Activated CD4-positive, alpha-beta T cell treated with anti-CD3 and anti-CD28 coated beads for 36 hours (primary cell): ENCODE measurements at regions of chr7 and their contacts with region 1.

Region 1: GRCh38 chr7:128455551-128456254 is at the start of gene HILPDA:
- DNase-seq: peak; percentile 98
- ATAC-seq: peak; percentile 81
- H3K4me3 Mint-ChIP-seq: peak within 1 kb of the TSS; percentile 83
- H3K27ac Mint-ChIP-seq: peak within 1 kb of the TSS; percentile 99
- H3K4me1 Mint-ChIP-seq: peaks cover 60% of the 10 kb centered on the region
- H3K27me3 Mint-ChIP-seq: peaks cover 8% of the 10 kb centered on the region
- total RNA-seq, gene HILPDA: 227 to 309 TPM

Region 2: GRCh38 chr7:127392566-127393367 is 1062.9 kb before region 1 on chr7 and contains the start of gene ZNF800:
- CTCF ChIA-PET with region 1: no interaction called
- POLR2A ChIA-PET with region 1: no interaction called
- intact Hi-C with region 1: loop called in 1 of 2 experiments (anchors 10 kb)
- DNase-seq: peak; percentile 93
- ATAC-seq: peak; percentile 81
- H3K4me3 Mint-ChIP-seq: peak within 1 kb of the TSS; percentile 87
- H3K27ac Mint-ChIP-seq: peak within 1 kb of the TSS; percentile 96
- H3K4me1 Mint-ChIP-seq: peaks cover 62% of the 10 kb centered on the region
- H3K27me3 Mint-ChIP-seq: no peaks in the 10 kb centered on the region
- total RNA-seq, gene ZNF800: 27.5 to 34.7 TPM

Region 3: GRCh38 chr7:127651556-127652332 is 804.0 kb before region 1 on chr7 and contains the start of gene SND1:
- CTCF ChIA-PET with region 1: no interaction called
- POLR2A ChIA-PET with region 1: no interaction called
- intact Hi-C with region 1: loop called in 1 of 2 experiments (anchors 5 kb)
- DNase-seq: peak; percentile 99
- ATAC-seq: peak; percentile 94
- H3K4me3 Mint-ChIP-seq: no peak within 1 kb of the TSS
- H3K27ac Mint-ChIP-seq: peak within 1 kb of the TSS; percentile 99
- H3K4me1 Mint-ChIP-seq: peaks cover 37% of the 10 kb centered on the region
- H3K27me3 Mint-ChIP-seq: no peaks in the 10 kb centered on the region
- total RNA-seq, gene SND1: 193 to 214 TPM

Region 4: GRCh38 chr7:128387216-128388144 is 68.2 kb before region 1 on chr7:
- CTCF ChIA-PET with region 1: interaction called, 14 read pairs
- POLR2A ChIA-PET with region 1: no interaction called
- intact Hi-C with region 1: no loop called
- DNase-seq: peak; percentile 84
- ATAC-seq: peak; percentile 83
- H3K4me3 Mint-ChIP-seq: no peak overlapping the region
- H3K27ac Mint-ChIP-seq: no peak overlapping the region
- H3K4me1 Mint-ChIP-seq: peaks cover 2% of the 10 kb centered on the region
- H3K27me3 Mint-ChIP-seq: no peaks in the 10 kb centered on the region

Region 5: GRCh38 chr7:128425850-128426249 is 29.9 kb before region 1 on chr7:
- CTCF ChIA-PET with region 1: interaction called, 269 read pairs
- POLR2A ChIA-PET with region 1: interaction called, 3 read pairs
- intact Hi-C with region 1: loop called (anchors 1 kb)
- DNase-seq: peak; percentile 91
- ATAC-seq: peak; percentile 82
- H3K4me3 Mint-ChIP-seq: no peak overlapping the region
- H3K27ac Mint-ChIP-seq: no peak overlapping the region
- H3K4me1 Mint-ChIP-seq: no peaks in the 10 kb centered on the region
- H3K27me3 Mint-ChIP-seq: peaks cover 12% of the 10 kb centered on the region

Region 6: GRCh38 chr7:128739048-128739962 is 283.6 kb after region 1 on chr7 and contains the start of gene CALU:
- CTCF ChIA-PET with region 1: no interaction called
- POLR2A ChIA-PET with region 1: interaction called, 3 read pairs
- intact Hi-C with region 1: loop called in 1 of 2 experiments (anchors 1 kb)
- DNase-seq: peak; percentile 97
- ATAC-seq: peak; percentile 98
- H3K4me3 Mint-ChIP-seq: peak within 1 kb of the TSS; percentile 99
- H3K27ac Mint-ChIP-seq: peak within 1 kb of the TSS; percentile 93
- H3K4me1 Mint-ChIP-seq: peaks cover 38% of the 10 kb centered on the region
- H3K27me3 Mint-ChIP-seq: peaks cover 3% of the 10 kb centered on the region
- total RNA-seq, gene CALU: 32.9 to 33.8 TPM

Region 7: DNA sequence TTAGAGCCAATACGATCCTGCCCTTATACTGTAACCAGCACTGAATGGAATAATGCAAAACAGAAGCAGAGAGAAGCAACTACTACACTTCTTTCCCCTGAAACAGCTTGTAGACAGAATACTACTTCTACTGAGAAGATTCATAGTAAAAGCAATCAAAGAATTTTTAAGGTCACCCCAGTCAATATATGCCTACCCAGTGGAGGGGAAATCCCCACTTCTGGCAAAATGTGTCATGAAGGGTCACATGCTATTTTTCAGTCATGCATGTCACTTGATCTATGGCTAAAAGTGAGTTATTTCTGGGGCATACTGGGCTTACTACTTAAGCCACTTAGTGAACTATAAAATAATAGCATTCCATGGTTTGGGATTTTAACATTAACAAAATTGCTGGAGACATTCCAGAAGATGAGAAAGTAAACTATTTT is 507.6 kb after region 1 on chr7:
- CTCF ChIA-PET with region 1: no interaction called
- POLR2A ChIA-PET with region 1: no interaction called
- intact Hi-C with region 1: loop called in 1 of 2 experiments (anchors 5 kb)
- DNase-seq: peak; percentile 70
- ATAC-seq: peak; percentile 85
- H3K4me3 Mint-ChIP-seq: peak overlapping the region; percentile 21
- H3K27ac Mint-ChIP-seq: peak overlapping the region; percentile 93
- H3K4me1 Mint-ChIP-seq: peaks cover 35% of the 10 kb centered on the region
- H3K27me3 Mint-ChIP-seq: no peaks in the 10 kb centered on the region